ENCODE measurements at regions of chr10 and their contacts with region 1.

Region 1: DNA sequence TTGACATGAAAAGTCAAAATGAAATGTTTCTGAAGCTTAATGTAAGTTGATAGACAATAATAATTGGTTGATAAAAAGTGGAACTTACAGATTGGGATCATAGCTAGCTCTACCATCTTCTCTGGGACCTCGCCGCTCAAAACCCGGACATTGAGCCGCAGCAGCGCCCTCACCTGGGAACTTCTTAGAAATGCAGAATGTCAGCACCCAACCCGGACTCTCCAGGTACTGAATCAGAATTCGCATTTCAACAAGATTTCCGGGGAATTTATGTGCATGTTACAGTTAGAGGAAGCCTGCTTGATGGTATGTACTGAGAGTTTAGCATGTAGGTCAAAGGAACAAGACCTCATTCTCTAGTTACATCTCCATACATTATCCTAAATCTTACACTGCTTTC is 36.7 kb upstream of the ABLIM1 start:
- DNase-seq: no peak
- ATAC-seq: no peak

Region 2: DNA sequence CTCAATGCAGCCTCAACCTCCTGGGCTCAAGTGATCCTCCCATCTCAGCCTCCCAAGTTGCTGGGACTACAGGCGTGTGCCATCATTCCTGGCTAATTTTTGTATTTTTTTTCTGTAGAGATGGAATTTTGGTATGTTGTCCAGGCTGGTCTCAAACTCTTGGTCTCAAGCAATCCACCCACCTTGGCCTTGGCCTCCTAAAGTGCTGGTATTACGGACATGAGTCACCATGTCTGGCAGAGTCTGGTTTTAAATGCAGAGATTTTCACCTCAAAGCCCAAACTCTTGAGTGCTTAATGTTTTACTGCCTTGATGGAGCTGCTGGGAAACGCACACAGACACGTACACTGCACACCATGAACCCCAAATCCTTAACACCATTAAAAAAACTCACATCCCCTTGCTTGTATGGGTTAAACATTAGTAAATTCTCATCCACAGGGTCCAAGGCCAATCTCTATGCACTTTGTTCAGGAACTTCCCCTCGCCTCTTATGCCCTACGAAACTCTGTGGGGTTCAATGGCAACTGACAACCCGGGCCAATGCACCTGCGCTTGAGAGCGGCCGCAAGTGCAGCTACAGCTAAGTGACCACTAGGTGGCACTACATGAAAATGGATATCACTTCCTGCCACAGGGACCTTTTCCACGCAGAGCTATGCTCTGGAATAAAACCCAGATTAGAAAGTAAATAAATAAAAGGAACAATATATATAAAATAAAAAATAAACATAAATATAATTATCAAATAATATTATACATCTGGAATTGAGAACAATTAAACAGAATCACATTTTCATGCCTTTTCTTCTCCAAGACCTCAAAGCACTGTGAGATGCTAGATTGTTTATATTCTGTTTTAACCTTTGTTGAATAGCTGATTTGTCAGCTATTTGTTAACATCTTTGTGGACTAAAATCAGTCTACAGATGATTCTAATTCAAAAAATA is 223.5 kb before region 1 on chr10:
- intact Hi-C with region 1: loop called (anchors 5 to 10 kb)
- DNase-seq: peak; percentile 68
- ATAC-seq: peak; percentile 76 to 87

Region 3: GRCh38 chr10:114477285-114477684 is 217.5 kb before region 1 on chr10:
- intact Hi-C with region 1: loop called (anchors 5 to 10 kb)
- DNase-seq: peak; percentile 34
- ATAC-seq: peak; percentile 19 to 53

Region 4: DNA sequence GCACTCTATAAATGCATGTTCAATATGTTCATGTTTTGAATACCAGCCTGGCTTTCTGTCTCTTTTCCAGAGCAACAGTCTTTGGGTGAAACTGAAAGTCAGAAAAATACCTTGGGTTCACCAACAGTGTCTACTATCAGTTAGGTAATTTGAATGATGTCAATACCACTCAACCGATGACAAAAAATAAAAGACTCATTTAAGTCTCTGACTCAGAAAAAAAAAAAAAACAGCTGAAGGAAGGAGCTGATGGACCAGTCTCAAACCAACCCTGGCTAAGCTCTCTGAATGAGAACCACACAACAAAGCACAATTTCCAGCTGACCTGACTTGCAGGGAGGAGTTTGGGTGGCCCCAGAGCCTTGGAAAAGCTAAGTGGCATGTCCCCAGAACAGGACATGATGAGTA is 79.1 kb before region 1 on chr10:
- intact Hi-C with region 1: no loop called
- DNase-seq: no peak
- ATAC-seq: no peak

Region 5: GRCh38 chr10:114631666-114632417 is 62.9 kb before region 1 on chr10:
- intact Hi-C with region 1: loop called (anchors 5 kb)
- DNase-seq: peak; percentile 53
- ATAC-seq: peak; percentile 53 to 61